A549 (cell line): ENCODE measurements at regions of chr17 and their contacts with region 1.

Region 1: DNA sequence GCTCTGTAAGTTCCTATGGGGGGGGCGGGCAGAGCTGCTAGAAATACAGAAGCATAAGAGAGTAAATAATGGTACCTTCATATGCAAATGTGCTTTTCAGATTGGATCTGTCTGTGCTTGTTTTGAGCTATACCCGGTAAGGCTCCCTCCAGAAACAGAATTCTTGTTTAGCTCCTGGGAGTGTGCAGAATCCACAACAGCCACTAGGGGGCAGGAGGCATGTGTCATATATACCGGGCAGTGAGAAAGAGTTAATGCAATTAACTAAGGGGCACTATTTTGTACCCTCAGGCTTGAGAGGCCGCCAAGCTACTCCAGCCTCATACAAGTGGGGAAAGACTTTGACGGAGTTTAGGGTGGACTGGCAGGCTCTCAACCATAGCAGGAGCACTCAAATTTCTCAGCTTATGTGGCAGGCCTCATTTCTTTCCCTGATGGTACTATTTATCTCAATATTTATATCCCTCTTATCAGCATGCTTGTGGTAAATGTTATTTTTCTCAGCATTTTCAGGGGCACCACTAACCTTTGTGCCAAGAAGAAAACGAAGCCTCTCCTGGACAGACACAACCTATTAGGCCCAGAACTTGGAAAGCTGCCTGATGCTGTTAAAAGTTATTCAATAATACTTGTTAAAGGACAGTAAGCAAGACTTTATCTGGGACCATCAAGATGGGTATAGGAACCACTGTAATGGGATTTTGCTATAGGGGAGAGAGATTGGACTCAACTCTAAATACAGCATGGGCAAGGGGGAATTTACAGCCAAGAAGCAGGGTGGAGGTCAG is 10.7 kb upstream of the CENPV start:
- DNase-seq: peak; percentile 83 to 84
- ATAC-seq: peak; percentile 96 to 97
- H3K4me3 ChIP-seq: no peak overlapping the region
- H3K27ac ChIP-seq: peak overlapping the region in 1 of 2 experiments; percentile 38; a peak in 3 of 6 replicates
- H3K4me1 ChIP-seq: peaks cover 7% of the 10 kb centered on the region; the same call in 1 of the 3 replicates
- CTCF ChIP-seq: peak; percentile 97
- EP300 ChIP-seq: no peak
- POLR2A ChIP-seq: no peak
- RAD21 ChIP-seq: peak; percentile 86 to 87

Region 2: GRCh38 chr17:16285957-16286640 is 77.8 kb before region 1 on chr17:
- CTCF ChIA-PET with region 1: interaction called, 17 read pairs
- POLR2A ChIA-PET with region 1: no interaction called
- DNase-seq: peak; percentile 99
- ATAC-seq: peak; percentile 88 to 92
- H3K4me3 ChIP-seq: no peak overlapping the region
- H3K27ac ChIP-seq: peak overlapping the region; percentile 96 to 97
- H3K4me1 ChIP-seq: peaks cover 78% of the 10 kb centered on the region
- CTCF ChIP-seq: peak; percentile 88; the same call in 2 of the 3 replicates
- EP300 ChIP-seq: peak; percentile 28 to 79; a peak in 2 of 5 replicates
- POLR2A ChIP-seq: peak; percentile 18; the same call in 1 of the 2 replicates
- RAD21 ChIP-seq: peak; percentile 88 to 89

Region 3: DNA sequence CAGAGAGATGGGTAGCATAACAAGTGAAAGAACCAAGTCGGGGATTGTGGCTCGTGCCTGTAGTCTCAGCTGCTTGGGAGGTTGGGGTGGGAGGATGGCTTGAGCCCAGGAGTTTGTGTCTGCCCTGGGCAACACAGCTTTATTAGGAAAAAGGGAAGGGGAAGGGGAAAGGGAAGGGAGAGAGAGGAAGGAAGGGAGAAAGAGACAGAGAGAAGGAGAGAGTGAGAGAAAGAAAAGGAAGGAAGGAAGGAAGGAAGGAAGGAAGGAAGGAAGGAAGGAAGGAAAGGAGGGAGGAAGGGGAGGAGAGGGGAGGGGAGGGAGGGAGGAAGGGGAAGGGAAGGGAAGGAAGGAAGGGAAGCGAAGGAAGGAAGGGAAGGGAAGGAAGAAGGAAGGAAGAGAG is 44.0 kb before region 1 on chr17:
- CTCF ChIA-PET with region 1: interaction called, 10 read pairs
- POLR2A ChIA-PET with region 1: no interaction called
- DNase-seq: no peak
- ATAC-seq: no peak
- H3K4me3 ChIP-seq: no peak overlapping the region
- H3K27ac ChIP-seq: no peak overlapping the region
- H3K4me1 ChIP-seq: no peaks in the 10 kb centered on the region
- CTCF ChIP-seq: no peak
- EP300 ChIP-seq: no peak
- POLR2A ChIP-seq: no peak
- RAD21 ChIP-seq: no peak

Region 4: DNA sequence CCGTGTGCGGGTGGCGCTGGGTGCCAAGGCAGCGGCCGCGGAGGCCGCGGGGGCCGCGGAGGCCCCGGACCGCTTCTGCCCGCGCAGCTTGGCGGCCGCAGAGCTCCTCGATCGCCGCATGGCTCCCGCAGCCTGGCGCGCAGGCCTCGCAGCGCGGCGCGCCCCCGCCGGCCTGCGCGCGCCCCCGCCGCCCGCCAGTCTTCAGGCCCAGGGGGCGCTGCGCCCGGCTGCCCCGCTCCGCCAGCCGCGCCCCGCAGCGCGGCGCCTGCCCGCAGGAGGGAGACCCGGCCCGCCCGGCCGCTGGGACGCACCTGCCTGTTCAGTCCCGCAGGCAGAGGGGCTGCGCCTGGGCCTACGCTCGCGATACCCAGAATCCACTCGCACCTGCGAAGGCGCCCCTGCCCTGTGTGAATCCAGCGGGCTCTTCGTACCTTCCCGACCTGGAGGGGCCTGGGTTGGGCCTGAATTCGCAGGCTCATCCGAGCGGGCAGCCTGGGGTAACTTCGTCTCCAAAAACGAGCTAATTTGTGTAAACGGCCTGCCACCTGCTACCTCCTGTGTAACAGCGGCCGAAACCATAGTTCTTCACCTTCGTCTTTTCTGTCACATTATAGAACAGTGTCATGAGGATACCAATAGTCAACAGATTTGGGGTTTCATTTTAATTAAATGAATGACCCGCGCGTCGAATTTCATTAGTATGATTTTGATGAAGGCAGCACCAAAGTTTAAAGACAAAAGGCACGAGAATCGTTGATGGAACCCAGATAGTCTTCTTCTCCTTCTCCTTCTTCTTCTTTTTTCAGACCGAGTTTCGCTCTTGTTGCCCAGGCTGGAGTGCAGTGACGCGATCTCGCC is 10.4 kb before region 1 on chr17 and contains the start of gene CENPV:
- CTCF ChIA-PET with region 1: interaction called, 163 read pairs
- POLR2A ChIA-PET with region 1: interaction called, 17 read pairs
- DNase-seq: peak; percentile 72 to 91
- ATAC-seq: peak; percentile 80 to 89
- H3K4me3 ChIP-seq: peak within 1 kb of the TSS; percentile 71
- H3K27ac ChIP-seq: peak within 1 kb of the TSS; percentile 87 to 96
- H3K4me1 ChIP-seq: peaks cover 12% of the 10 kb centered on the region
- CTCF ChIP-seq: peak; percentile 78
- EP300 ChIP-seq: no peak
- POLR2A ChIP-seq: peak; percentile 82
- RAD21 ChIP-seq: no peak
- polyA plus RNA-seq, gene CENPV: 191 and 202 TPM in 2 replicates

Region 5: GRCh38 chr17:16415031-16415924 is 51.3 kb after region 1 on chr17 and contains the start of gene TRPV2:
- CTCF ChIA-PET with region 1: interaction called, 12 read pairs
- POLR2A ChIA-PET with region 1: no interaction called
- DNase-seq: peak; percentile 53 to 55
- ATAC-seq: peak; percentile 40 to 81; a peak in 3 of 6 replicates
- H3K4me3 ChIP-seq: no peak within 1 kb of the TSS
- H3K27ac ChIP-seq: peak within 1 kb of the TSS in 1 of 2 experiments; percentile 39; a peak in 3 of 6 replicates
- H3K4me1 ChIP-seq: peaks cover 22% of the 10 kb centered on the region
- CTCF ChIP-seq: peak; percentile 46
- EP300 ChIP-seq: no peak
- POLR2A ChIP-seq: no peak
- RAD21 ChIP-seq: peak; percentile 29 to 55; a peak in 4 of 5 replicates
- polyA plus RNA-seq, gene TRPV2: 0.31 and 0.60 TPM in 2 replicates

Region 6: GRCh38 chr17:16444258-16444886 is 80.4 kb after region 1 on chr17:
- CTCF ChIA-PET with region 1: interaction called, 36 read pairs
- POLR2A ChIA-PET with region 1: interaction called, 15 read pairs
- DNase-seq: peak in 1 of 2 experiments; percentile 37
- ATAC-seq: peak; percentile 19 to 28; a peak in 4 of 6 replicates
- H3K4me3 ChIP-seq: no peak overlapping the region
- H3K27ac ChIP-seq: peak overlapping the region in 1 of 2 experiments; percentile 99; a peak in 3 of 6 replicates
- H3K4me1 ChIP-seq: peaks cover 48% of the 10 kb centered on the region
- CTCF ChIP-seq: no peak
- EP300 ChIP-seq: no peak
- POLR2A ChIP-seq: no peak
- RAD21 ChIP-seq: no peak